ENCODE measurements at regions of chr10 and their contacts with region 1.

Region 1: GRCh38 chr10:89217057-89217990 is 10.2 kb upstream of the CH25H start:
- DNase-seq: peak; percentile 54
- H3K4me3 ChIP-seq: no peak overlapping the region
- H3K27ac ChIP-seq: peak overlapping the region in 1 of 2 donors; percentile 32
- H3K4me1 ChIP-seq: no peaks in the 10 kb centered on the region
- H3K27me3 ChIP-seq: no peaks in the 10 kb centered on the region
- CTCF ChIP-seq: peak; percentile 79 to 91 (median 86)
- POLR2A ChIP-seq: no peak

Region 2: DNA sequence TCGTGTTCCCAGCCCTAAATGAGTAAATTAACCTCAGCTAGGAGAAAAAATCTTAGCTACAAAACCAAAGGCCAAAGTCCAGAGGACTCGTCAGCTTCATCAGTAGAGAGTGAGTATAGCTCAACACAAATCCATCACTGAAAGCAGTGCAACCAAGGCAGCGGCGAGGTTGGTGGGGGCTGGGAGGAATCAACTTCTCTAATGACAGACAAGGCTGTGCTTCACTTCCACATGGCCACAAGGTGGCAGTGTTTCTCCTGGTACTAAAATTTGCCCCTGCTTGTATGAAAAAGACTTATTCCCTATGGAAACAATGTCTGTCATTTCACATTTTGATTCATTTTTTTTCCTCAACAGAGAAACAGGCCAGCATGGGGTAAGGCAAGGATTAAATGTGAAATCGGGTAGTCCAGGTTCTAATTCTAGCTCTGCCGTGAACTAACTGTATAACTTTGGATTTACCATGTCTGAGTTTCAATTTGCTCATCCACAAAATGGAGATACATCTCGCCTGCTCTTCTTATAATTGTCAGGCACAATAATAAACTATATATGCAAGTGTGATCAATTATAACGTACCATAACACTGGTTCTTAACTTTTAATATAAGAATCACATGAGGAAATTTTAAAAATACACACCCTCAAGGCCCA is 187.4 kb before region 1 on chr10:
- intact Hi-C with region 1: loop called (anchors 1 kb)
- DNase-seq: peak; percentile 74
- H3K4me3 ChIP-seq: no peak overlapping the region
- H3K27ac ChIP-seq: no peak overlapping the region
- H3K4me1 ChIP-seq: peaks cover 3% of the 10 kb centered on the region
- H3K27me3 ChIP-seq: no peaks in the 10 kb centered on the region
- CTCF ChIP-seq: peak; percentile 84 to 95 (median 88)
- POLR2A ChIP-seq: no peak

Region 3: GRCh38 chr10:89384474-89385340 is 167.4 kb after region 1 on chr10:
- intact Hi-C with region 1: no loop called
- DNase-seq: no peak
- H3K4me3 ChIP-seq: no peak overlapping the region
- H3K27ac ChIP-seq: no peak overlapping the region
- H3K4me1 ChIP-seq: no peaks in the 10 kb centered on the region
- H3K27me3 ChIP-seq: no peaks in the 10 kb centered on the region
- CTCF ChIP-seq: no peak
- POLR2A ChIP-seq: no peak

Region 4: GRCh38 chr10:89481662-89482061 is 264.3 kb after region 1 on chr10:
- intact Hi-C with region 1: no loop called
- DNase-seq: no peak
- H3K4me3 ChIP-seq: no peak overlapping the region
- H3K27ac ChIP-seq: peak overlapping the region in 1 of 2 donors; percentile 38
- H3K4me1 ChIP-seq: no peaks in the 10 kb centered on the region
- H3K27me3 ChIP-seq: no peaks in the 10 kb centered on the region
- CTCF ChIP-seq: no peak
- POLR2A ChIP-seq: no peak

Measured in prostate gland (tissue), 2 donors.